Right ventricle myocardium superior (tissue), 1 donor: ENCODE measurements at regions of chr3 and their contacts with region 1.

Region 1: GRCh38 chr3:134212906-134213665 is 37.6 kb downstream of the RYK start:
- DNase-seq: peak; percentile 82
- ATAC-seq: peak; percentile 91

Region 2: DNA sequence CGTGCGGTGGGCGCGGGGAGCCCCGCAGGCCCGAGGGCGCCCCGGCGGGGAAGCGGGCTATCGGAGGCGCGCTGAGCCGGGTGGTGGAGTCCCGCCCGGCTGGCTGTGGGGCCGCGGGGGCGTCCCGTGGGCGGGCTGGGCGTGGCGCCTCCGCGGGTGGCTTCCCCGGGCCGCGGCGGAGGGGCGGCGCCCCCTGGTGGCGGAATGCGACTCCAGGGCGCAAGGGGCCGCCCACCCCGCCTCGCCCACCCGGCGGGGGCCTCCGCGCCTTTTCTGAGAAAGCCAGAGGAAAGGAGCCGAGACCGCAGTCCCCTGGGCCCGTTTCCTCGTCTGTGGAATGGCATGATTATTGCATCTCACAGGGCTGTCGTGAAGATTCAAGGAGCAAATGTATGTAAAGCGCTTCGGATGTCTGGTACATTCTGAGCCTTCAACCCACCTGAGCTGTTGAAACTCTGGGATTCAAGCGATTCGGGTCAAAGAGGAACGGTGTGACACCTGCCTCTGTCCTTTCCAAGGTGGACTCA is 285.5 kb before region 1 on chr3:
- intact Hi-C with region 1: loop called (anchors 5 kb)
- DNase-seq: peak; percentile 79
- ATAC-seq: peak; percentile 93

Region 3: GRCh38 chr3:133988631-133989161 is 224.4 kb before region 1 on chr3:
- intact Hi-C with region 1: no loop called
- DNase-seq: no peak
- ATAC-seq: no peak

Region 4: DNA sequence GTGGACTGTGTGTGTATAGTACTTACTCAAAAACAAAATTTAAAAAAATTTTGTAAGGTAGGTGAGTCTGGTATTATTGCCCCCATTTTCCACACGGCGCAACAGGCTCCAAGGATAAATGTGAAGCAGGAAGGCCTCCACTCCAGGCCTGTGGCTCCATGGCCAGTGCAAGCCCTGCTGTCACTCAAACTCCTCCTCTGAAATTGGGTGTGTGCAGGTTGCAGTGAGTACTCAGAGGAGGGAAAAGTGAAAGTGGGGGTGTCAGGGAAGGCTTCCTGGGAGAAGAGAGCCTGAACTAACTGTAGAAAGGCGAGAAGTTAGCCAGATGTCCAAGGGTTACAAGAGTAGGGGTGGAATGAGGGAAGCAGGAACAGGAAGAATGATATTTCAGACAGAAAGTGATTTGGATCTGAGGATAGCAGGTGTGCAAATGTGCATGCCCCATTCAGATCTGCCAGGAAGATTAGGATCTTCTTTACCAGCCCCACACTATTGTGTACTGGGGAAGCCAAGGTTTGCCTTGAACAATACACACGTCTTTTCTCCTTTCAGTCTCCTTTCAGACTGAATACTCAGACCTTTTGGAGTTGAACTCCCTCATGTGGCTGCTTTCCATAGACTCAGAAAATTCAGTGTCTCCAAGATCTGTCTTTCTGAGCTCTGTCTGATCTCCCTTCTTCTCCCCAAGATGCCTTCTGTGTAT is 86.2 kb after region 1 on chr3:
- intact Hi-C with region 1: loop called (anchors 5 kb)
- DNase-seq: no peak
- ATAC-seq: peak; percentile 66

Region 5: DNA sequence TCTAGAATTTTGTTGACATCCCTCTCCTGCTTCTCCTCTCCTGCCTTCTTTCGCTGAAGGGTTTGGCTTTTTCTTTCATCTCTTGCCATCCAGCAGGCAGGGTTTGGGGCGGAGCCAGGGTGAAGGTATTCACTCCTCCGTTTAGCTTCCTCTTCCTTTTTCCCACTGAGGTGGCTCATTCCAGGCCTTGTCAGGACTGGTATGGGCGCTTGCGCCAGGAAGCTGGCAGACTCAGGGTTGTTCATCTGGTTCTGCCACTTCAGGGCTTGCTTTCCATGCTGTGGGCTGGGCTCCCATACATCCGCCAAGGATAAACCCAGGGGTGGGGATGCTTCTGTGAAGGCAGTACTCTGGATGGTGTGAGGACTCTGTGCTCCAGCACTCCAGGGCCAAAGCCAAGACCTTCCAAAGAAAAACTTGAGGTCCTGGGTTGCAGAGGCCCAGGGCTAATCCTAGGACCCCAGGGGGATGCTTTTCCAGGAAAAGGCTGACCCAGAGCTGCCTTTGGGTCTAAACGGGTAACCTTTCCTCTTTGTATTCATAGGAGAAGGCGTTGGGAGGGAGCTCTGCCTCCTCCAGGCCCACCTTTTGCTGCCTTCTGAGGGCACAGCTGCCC is 168.8 kb after region 1 on chr3:
- intact Hi-C with region 1: loop called (anchors 10 kb)
- DNase-seq: no peak
- ATAC-seq: peak; percentile 12

Region 6: GRCh38 chr3:134473868-134474546 is 260.9 kb after region 1 on chr3:
- intact Hi-C with region 1: loop called (anchors 10 kb)
- DNase-seq: no peak
- ATAC-seq: peak; percentile 75